HCT116 (cell line): ENCODE measurements at regions of chr15 and their contacts with region 1.

Region 1: GRCh38 chr15:58070801-58071418 is 5.4 kb upstream of the ALDH1A2 start:
- DNase-seq: peak; percentile 57
- ATAC-seq: peak; percentile 54; the same call in 1 of the 2 replicates
- H3K4me3 ChIP-seq: no peak overlapping the region
- H3K27ac ChIP-seq: no peak overlapping the region
- H3K4me1 ChIP-seq: peaks cover 0 to 7% of the 10 kb centered on the region in 2 experiments; a peak in 1 of 4 replicates
- H3K27me3 ChIP-seq: no peaks in the 10 kb centered on the region
- CTCF ChIP-seq: peak; percentile 81 to 97 (median 88)
- POLR2A ChIP-seq: no peak
- RAD21 ChIP-seq: peak; percentile 89

Region 2: DNA sequence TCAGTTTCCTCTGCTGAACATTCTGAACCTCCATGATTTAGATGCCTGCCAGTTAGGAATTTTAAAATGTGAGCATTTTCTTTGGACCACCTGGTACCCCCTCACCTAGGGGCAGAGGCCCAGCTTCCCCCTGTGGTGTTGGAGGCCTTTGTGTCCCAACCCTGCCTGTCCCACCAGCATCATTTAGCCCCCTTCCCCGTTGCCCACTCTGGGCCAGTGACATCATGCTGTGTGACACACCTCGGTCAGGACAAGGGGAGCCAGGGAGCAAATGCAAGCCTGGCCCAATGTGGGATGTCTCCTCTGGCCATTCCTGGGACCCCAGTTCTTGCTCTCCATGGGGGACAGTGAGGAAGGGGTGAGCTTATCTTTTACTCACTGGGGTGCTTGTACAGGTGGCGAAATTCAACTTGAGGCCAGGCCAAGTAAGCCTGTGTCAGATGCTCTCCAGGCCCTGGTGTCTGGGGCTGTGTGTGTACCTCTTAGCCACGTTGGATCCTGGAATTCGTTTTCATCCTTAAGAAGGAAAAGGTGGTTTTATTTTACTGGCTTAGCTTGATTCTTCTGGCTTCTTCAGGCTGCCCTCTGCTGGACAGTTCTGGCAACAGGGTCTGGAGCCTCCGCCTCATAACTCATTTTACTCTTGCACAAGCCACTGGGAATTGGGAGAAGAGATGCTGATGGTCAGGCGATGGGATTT is 529.0 kb before region 1 on chr15:
- CTCF ChIA-PET with region 1: interaction called, 12 read pairs
- POLR2A ChIA-PET with region 1: no interaction called
- RAD21 ChIA-PET with region 1: no interaction called
- intact Hi-C with region 1: no loop called
- DNase-seq: peak; percentile 45
- ATAC-seq: peak; percentile 86
- H3K4me3 ChIP-seq: no peak overlapping the region
- H3K27ac ChIP-seq: no peak overlapping the region
- H3K4me1 ChIP-seq: peaks cover 3 to 6% of the 10 kb centered on the region in 2 experiments; a peak in 3 of 4 replicates
- H3K27me3 ChIP-seq: no peaks in the 10 kb centered on the region
- CTCF ChIP-seq: peak; percentile 61 to 89 (median 86); a peak in 5 of 6 replicates
- POLR2A ChIP-seq: no peak
- RAD21 ChIP-seq: peak; percentile 69

Region 3: GRCh38 chr15:57732526-57733331 is 338.2 kb before region 1 on chr15:
- CTCF ChIA-PET with region 1: interaction called, 35 read pairs
- POLR2A ChIA-PET with region 1: no interaction called
- RAD21 ChIA-PET with region 1: no interaction called
- intact Hi-C with region 1: loop called (anchors 1 kb)
- DNase-seq: peak; percentile 48
- ATAC-seq: peak; percentile 91
- H3K4me3 ChIP-seq: no peak overlapping the region
- H3K27ac ChIP-seq: no peak overlapping the region
- H3K4me1 ChIP-seq: peaks cover 4% of the 10 kb centered on the region in 2 experiments; a peak in 3 of 4 replicates
- H3K27me3 ChIP-seq: no peaks in the 10 kb centered on the region
- CTCF ChIP-seq: peak; percentile 47 to 97 (median 89); a peak in 5 of 6 replicates
- POLR2A ChIP-seq: no peak
- RAD21 ChIP-seq: peak; percentile 46; the same call in 1 of the 2 replicates

Region 4: DNA sequence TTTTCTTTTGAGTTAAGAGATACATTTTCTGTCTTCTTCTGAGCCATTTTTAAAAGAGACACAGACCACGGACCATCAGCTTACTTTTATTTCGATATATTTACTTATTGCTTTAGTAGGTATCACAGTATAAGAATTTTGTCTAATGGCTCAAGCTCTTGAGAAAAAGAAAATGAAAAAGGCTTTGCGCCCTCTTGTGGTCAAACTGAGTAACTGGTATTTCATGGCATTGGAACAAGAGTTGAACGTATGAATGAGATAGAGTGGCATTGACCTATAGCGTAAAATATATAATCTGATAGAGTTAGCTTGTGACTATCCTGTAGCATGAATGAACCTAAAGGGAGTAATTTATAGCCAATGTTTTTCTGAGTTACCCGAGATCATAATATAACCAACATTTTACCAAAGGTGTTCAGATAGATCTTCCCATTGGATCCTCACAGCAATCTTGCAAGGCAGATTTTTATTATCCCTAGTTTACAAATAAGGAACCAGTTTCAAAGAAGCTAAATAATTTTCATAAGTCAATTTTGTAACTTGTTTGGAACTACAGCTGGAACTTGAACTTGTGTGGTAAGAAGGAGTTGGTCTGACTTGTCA is 209.8 kb before region 1 on chr15:
- CTCF ChIA-PET with region 1: interaction called, 66 read pairs
- POLR2A ChIA-PET with region 1: no interaction called
- RAD21 ChIA-PET with region 1: interaction called in 1 of 2 experiments, 3 read pairs
- intact Hi-C with region 1: loop called (anchors 1 kb)
- DNase-seq: peak; percentile 60
- ATAC-seq: peak; percentile 82
- H3K4me3 ChIP-seq: no peak overlapping the region
- H3K27ac ChIP-seq: no peak overlapping the region
- H3K4me1 ChIP-seq: no peaks in the 10 kb centered on the region
- H3K27me3 ChIP-seq: no peaks in the 10 kb centered on the region
- CTCF ChIP-seq: peak; percentile 62 to 86 (median 65); a peak in 5 of 6 replicates
- POLR2A ChIP-seq: no peak
- RAD21 ChIP-seq: peak; percentile 73

Region 5: GRCh38 chr15:58057559-58057958 is 13.4 kb before region 1 on chr15:
- CTCF ChIA-PET with region 1: interaction called, 18 read pairs
- POLR2A ChIA-PET with region 1: no interaction called
- RAD21 ChIA-PET with region 1: no interaction called
- intact Hi-C with region 1: no loop called
- DNase-seq: no peak
- ATAC-seq: no peak
- H3K4me3 ChIP-seq: no peak overlapping the region
- H3K27ac ChIP-seq: no peak overlapping the region
- H3K4me1 ChIP-seq: no peaks in the 10 kb centered on the region
- H3K27me3 ChIP-seq: no peaks in the 10 kb centered on the region
- CTCF ChIP-seq: no peak
- POLR2A ChIP-seq: no peak
- RAD21 ChIP-seq: no peak

Region 6: GRCh38 chr15:58608129-58608590 is 537.2 kb after region 1 on chr15:
- CTCF ChIA-PET with region 1: no interaction called
- POLR2A ChIA-PET with region 1: no interaction called
- RAD21 ChIA-PET with region 1: no interaction called
- intact Hi-C with region 1: no loop called
- DNase-seq: no peak
- ATAC-seq: no peak
- H3K4me3 ChIP-seq: no peak overlapping the region
- H3K27ac ChIP-seq: no peak overlapping the region
- H3K4me1 ChIP-seq: no peaks in the 10 kb centered on the region
- H3K27me3 ChIP-seq: no peaks in the 10 kb centered on the region
- CTCF ChIP-seq: no peak
- POLR2A ChIP-seq: no peak
- RAD21 ChIP-seq: no peak